ENCODE measurements at regions of chr20 and their contacts with region 1.

Region 1: GRCh38 chr20:36881888-36882287 is 6.0 kb downstream of the TLDC2 start:
- DNase-seq: no peak
- ATAC-seq: peak; percentile 55; the same call in 1 of the 2 replicates
- H3K4me3 ChIP-seq: no peak overlapping the region
- H3K27ac ChIP-seq: no peak overlapping the region
- H3K4me1 ChIP-seq: peaks cover 10 to 16% of the 10 kb centered on the region in 2 experiments
- H3K27me3 ChIP-seq: no peaks in the 10 kb centered on the region
- CTCF ChIP-seq: no peak
- POLR2A ChIP-seq: no peak
- RAD21 ChIP-seq: no peak

Region 2: GRCh38 chr20:36835453-36836198 is 46.3 kb before region 1 on chr20:
- CTCF ChIA-PET with region 1: interaction called, 13 read pairs
- POLR2A ChIA-PET with region 1: no interaction called
- RAD21 ChIA-PET with region 1: no interaction called
- intact Hi-C with region 1: no loop called
- DNase-seq: peak; percentile 80
- ATAC-seq: peak; percentile 90
- H3K4me3 ChIP-seq: peak overlapping the region; percentile 44 to 53
- H3K27ac ChIP-seq: peak overlapping the region; percentile 85
- H3K4me1 ChIP-seq: peaks cover 39 to 59% of the 10 kb centered on the region in 2 experiments
- H3K27me3 ChIP-seq: no peaks in the 10 kb centered on the region
- CTCF ChIP-seq: no peak
- POLR2A ChIP-seq: peak; percentile 24
- RAD21 ChIP-seq: no peak

Measured in HCT116 (cell line).